ENCODE measurements at regions of chr16 and their contacts with region 1.

Region 1: DNA sequence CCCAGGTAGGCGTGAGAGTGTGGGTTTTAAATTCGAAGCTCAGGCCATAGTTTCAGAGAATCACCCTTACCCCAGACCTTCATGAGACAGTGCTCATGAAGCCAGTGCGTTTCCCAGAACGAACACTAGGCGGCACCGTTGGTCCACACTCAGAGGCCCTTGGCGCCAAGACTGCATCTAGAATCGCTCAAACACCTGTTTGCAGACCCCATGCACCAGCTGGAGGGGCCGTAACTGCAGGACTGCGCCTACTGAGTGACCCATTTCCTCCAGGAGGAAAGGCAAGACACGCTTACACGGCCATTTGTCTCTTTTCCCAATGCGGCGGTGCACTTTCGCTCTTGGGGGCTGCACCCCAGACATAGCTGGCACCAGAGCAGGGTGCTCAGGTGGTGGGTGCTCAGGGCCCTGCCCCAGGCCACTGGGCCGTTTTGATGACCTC is 34.0 kb downstream of the ADGRG5 start:
- DNase-seq: peak; percentile 79
- CTCF ChIP-seq: peak; percentile 99

Region 2: GRCh38 chr16:57394444-57394843 is 182.0 kb before region 1 on chr16:
- CTCF ChIA-PET with region 1: no interaction called
- POLR2A ChIA-PET with region 1: no interaction called
- DNase-seq: no peak
- CTCF ChIP-seq: no peak

Region 3: DNA sequence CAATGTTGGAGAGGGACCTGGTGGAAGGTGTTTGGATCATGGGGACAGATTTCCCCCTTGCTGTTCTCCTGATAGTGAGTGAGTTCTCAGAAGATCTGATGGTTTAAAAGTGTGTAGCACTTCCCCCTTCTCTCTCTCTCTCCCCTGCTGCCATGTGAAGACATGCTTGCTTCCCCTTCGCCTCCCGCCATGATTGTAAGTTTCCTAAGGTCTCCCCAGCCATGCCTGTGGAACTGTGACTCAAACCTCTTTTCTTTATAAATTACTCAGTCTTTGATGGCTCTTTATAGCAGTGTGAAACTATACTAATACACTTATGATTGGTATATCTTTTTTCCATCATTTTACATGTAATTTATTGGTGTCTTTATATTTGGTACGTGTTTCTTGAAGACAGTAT is 20.6 kb before region 1 on chr16:
- CTCF ChIA-PET with region 1: interaction called, 32 read pairs
- POLR2A ChIA-PET with region 1: no interaction called
- DNase-seq: no peak
- CTCF ChIP-seq: no peak

Region 4: DNA sequence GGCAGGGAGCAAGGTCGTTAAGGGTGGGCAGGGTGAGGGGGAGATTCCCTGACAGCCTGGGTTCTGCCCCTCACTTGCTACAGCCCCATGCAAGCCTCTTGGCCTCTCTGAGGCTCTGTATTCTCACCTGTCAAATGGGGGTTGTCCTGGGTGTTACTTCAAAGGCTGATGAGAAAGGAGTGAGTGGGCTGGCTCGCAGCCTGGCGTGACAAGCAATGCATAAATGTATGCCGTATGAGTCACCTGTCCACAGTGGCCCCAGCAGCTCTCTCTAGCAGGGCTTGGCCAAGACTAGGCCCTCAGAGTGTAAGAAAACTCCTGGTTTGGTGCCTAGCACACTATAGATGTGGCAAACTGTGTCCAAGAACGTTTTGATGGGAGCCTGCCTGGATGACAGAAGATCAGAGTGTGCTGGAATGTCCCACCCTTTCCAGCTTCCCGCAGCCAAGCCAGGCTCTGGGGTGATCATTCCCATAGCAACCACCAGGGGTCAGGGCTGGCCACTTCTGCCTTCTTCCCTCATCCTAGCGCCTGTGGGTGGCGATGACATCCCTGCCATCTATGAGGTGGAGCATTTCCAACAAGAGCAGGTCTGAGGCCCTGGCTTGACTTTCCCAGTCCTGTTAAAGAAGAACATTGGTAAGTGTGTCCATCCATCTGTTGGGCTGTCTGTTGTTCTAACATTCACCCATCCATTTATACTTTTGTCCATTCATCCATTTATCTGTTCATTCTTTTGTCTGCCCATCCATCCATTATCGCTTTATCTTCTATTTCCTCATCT is 14.8 kb after region 1 on chr16:
- CTCF ChIA-PET with region 1: interaction called, 179 read pairs
- POLR2A ChIA-PET with region 1: no interaction called
- DNase-seq: peak; percentile 79
- CTCF ChIP-seq: peak; percentile 84

Region 5: GRCh38 chr16:57609541-57610401 is 33.3 kb after region 1 on chr16:
- CTCF ChIA-PET with region 1: interaction called, 35 read pairs
- POLR2A ChIA-PET with region 1: no interaction called
- DNase-seq: peak; percentile 85
- CTCF ChIP-seq: peak; percentile 47

Region 6: DNA sequence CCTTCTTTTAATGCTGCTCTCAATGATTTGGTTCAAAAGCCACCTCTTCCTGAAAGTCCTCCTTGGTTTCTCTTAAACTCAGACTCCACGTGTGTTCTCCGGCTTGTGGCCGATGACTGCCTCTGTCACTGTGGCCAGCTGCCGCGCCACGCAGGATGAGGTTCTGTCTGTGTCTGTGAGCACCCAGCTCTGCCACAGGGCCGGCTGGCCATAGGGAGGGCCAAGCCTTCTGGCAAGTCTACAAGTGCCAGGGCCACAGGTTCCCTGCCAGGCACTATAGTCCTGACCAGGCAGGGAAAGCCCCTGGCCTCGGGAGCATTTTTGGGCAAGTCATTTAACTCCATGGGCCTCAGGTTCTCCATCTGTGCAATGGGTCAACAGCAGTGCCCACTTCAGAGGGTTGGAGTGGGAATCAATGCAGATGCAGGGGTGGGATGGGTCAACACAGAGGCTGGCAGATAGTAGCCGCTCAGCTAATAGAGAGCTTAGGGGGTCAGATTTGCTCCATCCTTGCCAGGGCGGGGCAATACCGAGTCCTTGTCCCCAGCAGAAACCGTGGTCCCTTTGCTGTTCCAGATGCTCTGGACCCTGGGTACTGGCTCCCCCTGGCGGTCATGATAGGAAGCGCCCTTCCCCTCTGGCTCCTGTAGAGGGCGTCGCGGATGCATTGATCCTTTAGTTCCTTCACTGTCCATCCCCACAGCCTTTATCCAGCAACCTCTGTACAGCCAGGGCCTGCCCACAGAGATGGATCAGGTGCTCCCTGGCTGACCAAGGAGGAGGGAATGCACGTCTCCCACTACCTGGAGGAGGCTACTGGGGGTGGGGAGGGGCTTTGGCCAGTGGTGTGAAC is 72.4 kb after region 1 on chr16:
- CTCF ChIA-PET with region 1: interaction called, 219 read pairs
- POLR2A ChIA-PET with region 1: no interaction called
- DNase-seq: peak; percentile 92
- CTCF ChIP-seq: peak; percentile 100

Region 7: DNA sequence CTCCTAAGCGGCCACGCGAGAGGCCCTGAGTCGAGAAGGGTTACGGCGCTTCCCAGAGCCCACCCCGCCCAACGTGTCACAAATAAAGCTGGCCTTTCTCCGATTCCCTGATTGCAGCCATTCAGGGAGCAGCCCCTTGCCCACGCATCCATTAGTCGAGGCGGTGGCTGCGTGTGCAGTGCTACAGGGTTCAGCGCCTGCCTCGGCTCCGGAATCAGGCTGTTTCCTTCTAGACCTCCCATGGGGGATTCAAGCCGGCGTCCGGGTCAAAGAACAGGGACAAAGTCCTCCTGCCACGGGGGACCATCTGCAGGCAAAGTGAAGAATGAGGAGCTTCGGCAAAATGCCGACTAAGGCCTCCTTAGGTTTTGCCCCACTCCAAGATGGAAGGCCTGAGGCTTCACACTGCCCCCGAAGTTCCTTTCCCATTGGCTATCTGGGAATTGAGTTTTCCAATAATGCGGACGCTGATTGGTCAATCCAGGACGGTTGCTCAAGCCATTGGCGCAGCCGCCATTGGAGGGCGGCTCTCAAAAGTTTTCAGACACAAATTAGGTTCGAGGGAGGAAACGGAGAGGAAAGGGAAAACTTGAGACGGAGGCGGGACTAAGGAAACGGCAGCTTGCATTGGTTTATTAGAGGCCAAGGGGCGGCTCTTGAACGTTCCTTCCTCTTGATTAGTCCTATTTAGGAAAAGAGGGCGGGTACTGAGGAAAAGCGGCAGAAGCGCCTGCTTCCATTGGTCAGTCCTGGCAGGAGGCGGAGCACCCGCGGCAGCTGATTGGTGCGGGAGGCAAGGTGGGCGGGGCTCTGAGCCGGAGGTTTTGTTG is 158.7 kb after region 1 on chr16:
- CTCF ChIA-PET with region 1: interaction called, 17 read pairs
- POLR2A ChIA-PET with region 1: no interaction called
- DNase-seq: peak; percentile 99
- CTCF ChIP-seq: no peak